ENCODE measurements at regions of chr6 and their contacts with region 1.

Region 1: DNA sequence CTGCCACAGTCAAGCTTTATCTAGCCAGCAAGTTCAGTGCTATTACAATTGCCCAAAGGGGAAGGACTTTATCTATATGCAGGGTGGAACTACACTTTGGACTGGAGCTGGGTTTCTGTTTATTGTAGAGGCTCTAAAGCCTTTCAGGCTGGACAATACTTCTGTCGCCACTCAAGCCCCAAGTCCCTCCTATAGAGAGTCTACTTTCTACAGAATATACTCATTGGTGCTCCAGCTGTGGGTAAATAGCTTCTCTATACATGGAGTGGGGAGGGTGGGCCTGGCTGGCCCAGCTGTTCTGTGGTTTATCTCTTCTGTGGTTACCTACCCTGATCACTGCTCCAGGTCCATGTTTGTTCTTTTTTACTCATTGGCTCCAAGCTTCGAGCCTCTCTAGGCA is 151.8 kb upstream of the MYLIP start:
- DNase-seq: no peak
- ATAC-seq: no peak
- H3K4me3 ChIP-seq: no peak overlapping the region
- H3K27ac ChIP-seq: no peak overlapping the region
- H3K4me1 ChIP-seq: no peaks in the 10 kb centered on the region
- H3K27me3 ChIP-seq: no peaks in the 10 kb centered on the region
- CTCF ChIP-seq: no peak
- EP300 ChIP-seq: no peak
- POLR2A ChIP-seq: no peak
- RAD21 ChIP-seq: no peak

Region 2: GRCh38 chr6:15962449-15962764 is 14.6 kb before region 1 on chr6:
- CTCF ChIA-PET with region 1: interaction called, 4 read pairs
- POLR2A ChIA-PET with region 1: interaction called, 4 read pairs
- RAD21 ChIA-PET with region 1: no interaction called
- SMC1A ChIA-PET with region 1: interaction called, 15 read pairs
- in situ Hi-C with region 1: no loop called
- intact Hi-C with region 1: no loop called
- DNase-seq: no peak
- ATAC-seq: peak; percentile 78
- H3K4me3 ChIP-seq: no peak overlapping the region
- H3K27ac ChIP-seq: peak overlapping the region; percentile 45
- H3K4me1 ChIP-seq: peaks cover 26% of the 10 kb centered on the region; the same call in 1 of the 2 replicates
- H3K27me3 ChIP-seq: no peaks in the 10 kb centered on the region
- CTCF ChIP-seq: no peak
- EP300 ChIP-seq: peak; percentile 12 to 48; a peak in 2 of 4 replicates
- POLR2A ChIP-seq: no peak
- RAD21 ChIP-seq: no peak

Measured in GM12878 (cell line).